ENCODE measurements at regions of chr10 and their contacts with region 1.

Region 1: DNA sequence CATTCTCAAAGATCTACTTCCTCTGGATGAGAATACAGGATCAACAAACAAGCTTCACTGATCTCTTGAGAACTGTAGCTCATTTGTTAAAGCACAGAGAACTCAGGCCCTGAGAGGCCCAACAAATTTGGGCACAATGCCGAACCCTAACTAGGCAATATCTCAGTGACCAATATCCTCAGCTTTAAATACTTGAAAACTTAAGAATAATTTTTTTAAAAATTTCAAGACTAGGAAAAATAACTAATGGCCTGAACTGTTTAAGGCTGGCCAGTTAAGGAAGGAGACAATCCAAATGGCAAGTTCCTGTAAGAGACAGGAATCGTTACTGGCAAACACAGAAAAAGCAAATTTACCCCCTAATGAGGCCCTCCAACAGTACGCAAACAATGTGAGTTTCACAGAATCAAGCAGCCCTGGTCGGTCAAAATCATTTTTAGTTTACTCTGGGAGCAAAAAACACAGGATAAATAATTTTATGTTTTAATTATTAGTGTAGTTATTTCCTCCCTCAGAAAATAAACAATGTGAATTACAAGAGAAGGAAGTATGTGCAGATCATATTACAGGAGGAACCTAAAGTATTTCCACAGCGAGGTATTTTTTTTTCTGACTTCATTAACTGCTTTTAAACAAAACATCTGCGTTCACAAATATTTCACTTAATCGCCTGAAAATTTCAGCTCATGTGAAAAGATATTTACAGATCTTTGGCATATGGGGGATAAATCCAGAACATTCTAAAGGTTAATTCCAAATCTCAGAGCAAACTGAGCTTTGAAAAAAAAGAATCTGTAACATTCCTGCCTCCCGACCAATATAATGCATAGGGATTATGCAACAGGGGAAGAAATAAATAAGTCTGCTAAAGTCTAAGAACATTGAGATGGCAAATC is 39.5 kb downstream of the NT5C2 start:
- DNase-seq: no peak
- CTCF ChIP-seq: no peak

Region 2: DNA sequence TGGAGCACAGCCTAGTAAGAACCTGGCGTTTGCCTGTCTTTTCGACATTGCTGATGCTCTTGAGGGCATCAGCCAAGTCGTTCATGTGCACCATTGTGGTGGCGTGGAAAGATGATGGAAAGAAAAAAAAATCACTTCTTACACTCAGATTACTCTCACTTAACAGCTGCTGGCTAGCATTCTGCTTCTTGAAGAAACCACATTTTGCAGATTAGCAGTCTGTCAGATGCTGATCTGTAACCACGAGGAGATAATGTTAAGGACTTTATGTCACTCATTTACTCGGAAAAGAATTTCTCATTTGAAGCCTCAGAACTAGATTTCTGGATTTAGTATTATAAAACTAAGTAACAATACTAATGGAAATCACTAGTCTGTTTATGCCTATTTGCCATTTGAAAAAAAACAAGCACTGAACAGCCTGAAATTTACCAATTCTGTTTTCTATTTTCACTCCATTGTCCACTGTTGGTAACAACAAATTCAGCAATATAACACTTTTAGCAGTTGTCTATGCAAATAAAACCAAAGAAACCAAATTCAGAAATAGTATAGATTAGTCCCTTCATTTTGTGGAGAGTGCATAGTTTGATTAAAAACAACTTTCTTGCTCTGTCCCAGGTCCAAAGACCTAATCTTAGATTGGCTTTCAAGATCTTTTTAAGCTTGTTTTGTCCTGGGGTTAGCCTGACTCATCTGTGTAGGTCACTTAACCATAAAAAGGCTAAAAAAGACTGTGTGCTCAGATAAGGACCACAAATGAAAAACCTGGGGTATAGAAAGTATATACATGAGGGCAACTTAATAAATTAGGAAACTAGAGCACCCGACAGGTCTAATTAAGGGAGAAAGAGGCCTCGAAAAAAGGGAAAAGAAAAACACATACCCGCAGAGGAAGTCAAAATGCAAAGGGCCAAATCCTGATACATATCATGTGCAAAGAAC is 28.0 kb before region 1 on chr10:
- CTCF ChIA-PET with region 1: no interaction called
- POLR2A ChIA-PET with region 1: no interaction called
- DNase-seq: peak; percentile 45
- CTCF ChIP-seq: no peak

Region 3: DNA sequence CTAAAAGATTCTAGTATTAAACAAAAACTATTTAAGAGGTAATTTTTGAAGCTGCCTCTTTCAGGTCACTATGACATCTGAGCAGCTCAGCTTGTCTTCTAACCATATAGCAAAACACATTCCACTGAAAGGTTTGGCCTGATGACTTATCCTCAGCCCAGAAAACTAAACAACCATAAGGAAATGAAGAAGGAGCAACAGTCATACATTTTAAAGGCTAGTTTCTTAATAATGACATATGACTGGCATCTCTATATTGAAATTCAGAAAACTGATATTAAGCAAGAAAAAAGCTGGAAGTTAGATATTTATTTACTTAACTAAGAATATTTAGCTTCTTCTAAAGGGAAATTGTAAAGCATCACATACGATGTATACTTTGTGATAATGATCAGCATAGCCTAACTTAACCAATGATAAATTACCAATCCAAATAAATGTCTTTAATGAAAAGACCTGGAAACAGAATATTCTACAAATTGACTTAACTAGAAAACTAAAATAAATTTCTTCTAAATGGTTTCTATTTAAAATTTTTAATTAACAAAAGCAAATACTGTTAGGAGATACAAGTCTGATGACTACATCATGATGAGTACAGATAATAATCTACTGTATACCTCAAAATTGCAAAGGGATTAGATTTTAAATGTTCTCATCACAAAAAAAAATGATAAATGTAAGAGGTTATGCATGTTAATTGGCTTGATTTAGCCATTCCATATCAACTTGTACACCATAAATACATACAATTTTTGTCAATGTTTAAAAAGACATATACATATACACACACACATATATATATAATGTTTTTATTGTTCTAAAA is 15.1 kb after region 1 on chr10:
- CTCF ChIA-PET with region 1: interaction called, 8 read pairs
- POLR2A ChIA-PET with region 1: interaction called, 11 read pairs
- DNase-seq: no peak
- CTCF ChIP-seq: no peak